AG04450 (cell line): ENCODE measurements at regions of chr11 and their contacts with region 1.

Region 1: DNA sequence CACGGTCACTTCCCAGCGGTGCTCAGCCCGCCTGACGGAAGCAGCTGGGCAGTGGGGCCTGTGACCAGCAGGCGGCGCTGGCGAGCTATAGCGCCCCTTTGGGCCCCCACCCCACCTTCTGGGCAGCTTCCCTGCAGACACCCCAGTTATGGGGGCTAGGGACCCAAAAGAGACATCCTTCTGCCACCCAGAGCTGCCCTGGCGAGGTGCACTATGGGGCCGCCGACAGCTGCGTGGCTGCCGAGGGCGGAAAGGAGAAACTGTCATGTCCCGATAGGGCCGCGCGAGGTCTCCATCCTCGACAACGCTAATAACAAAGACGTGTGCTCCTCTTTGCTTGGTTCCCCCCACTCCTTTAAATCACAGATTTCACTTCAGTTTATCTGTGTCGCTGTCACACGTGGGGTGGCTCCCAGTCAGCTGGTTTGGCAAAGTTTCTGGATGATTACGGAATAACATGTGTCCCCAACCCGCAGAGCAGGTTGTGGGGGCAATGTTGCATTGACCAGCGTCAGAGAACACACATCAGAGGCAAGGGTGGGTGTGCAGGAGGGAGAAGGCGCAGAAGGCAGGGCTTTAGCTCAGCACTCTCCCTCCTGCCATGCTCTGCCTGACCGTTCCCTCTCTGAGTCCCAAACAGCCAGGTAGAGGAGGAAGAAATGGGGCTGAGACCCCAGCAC is 674 bp upstream of the MYO7A start:
- DNase-seq: no peak
- H3K4me3 ChIP-seq: peak overlapping the region; percentile 59
- H3K27ac ChIP-seq: no peak overlapping the region
- H3K27me3 ChIP-seq: no peaks in the 10 kb centered on the region
- CTCF ChIP-seq: peak; percentile 100

Region 2: GRCh38 chr11:77107950-77108349 is 19.4 kb before region 1 on chr11:
- CTCF ChIA-PET with region 1: interaction called, 24 read pairs
- POLR2A ChIA-PET with region 1: no interaction called
- DNase-seq: peak; percentile 52
- H3K4me3 ChIP-seq: no peak overlapping the region
- H3K27ac ChIP-seq: peak overlapping the region; percentile 25
- H3K27me3 ChIP-seq: no peaks in the 10 kb centered on the region
- CTCF ChIP-seq: no peak

Region 3: GRCh38 chr11:77113382-77114088 is 13.8 kb before region 1 on chr11:
- CTCF ChIA-PET with region 1: interaction called, 24 read pairs
- POLR2A ChIA-PET with region 1: no interaction called
- DNase-seq: no peak
- H3K4me3 ChIP-seq: no peak overlapping the region
- H3K27ac ChIP-seq: no peak overlapping the region
- H3K27me3 ChIP-seq: no peaks in the 10 kb centered on the region
- CTCF ChIP-seq: peak; percentile 74

Region 4: GRCh38 chr11:77140231-77140851 is 13.0 kb after region 1 on chr11:
- CTCF ChIA-PET with region 1: interaction called, 26 read pairs
- POLR2A ChIA-PET with region 1: no interaction called
- DNase-seq: no peak
- H3K4me3 ChIP-seq: no peak overlapping the region
- H3K27ac ChIP-seq: no peak overlapping the region
- H3K27me3 ChIP-seq: peaks cover 5% of the 10 kb centered on the region
- CTCF ChIP-seq: no peak

Region 5: DNA sequence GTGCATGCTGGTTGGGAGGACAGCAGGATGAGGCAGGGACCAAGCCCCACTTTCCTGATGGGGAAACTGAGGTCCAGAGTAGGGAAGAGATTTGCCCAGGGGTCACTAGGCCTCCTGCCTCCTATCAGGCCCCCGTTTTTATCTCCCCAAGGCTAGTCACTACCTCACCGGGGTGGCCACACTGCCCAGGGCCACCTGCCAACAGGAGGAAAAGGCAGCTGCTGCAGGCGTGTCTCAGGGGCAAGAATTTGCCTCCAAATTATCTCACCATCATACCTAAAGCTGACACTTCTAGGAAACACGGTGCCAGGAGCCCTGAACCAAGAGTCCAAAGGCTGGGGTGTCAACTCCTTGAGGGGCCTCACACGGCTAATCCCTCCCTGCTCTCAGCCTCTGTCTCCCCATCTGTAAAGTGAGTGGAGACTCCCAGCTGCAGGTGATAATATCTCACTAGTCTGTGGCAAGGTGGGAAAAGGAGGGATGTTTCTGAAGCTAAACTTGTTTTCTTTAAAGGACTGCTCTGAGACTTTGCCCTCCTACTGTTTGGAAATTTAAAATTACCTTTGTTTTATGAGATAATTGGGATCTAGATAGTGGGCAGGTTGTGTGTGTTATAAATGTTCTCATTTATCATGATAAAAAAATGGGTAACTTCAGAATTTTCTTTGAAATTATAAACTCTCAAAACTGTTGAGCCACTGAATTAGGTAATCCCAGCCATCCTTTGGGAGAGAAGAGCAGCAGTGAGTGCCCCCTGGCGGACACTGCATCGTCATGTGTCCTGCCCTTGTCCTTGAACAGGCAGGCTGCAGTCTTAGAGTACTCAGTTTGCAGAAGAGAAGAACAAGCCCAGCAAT is 60.6 kb after region 1 on chr11:
- CTCF ChIA-PET with region 1: interaction called, 62 read pairs
- POLR2A ChIA-PET with region 1: no interaction called
- DNase-seq: peak; percentile 53
- H3K4me3 ChIP-seq: no peak overlapping the region
- H3K27ac ChIP-seq: no peak overlapping the region
- H3K27me3 ChIP-seq: peaks cover 17% of the 10 kb centered on the region
- CTCF ChIP-seq: peak; percentile 95